HepG2 (cell line): ENCODE measurements at regions of chr3 and their contacts with region 1.

Region 1: DNA sequence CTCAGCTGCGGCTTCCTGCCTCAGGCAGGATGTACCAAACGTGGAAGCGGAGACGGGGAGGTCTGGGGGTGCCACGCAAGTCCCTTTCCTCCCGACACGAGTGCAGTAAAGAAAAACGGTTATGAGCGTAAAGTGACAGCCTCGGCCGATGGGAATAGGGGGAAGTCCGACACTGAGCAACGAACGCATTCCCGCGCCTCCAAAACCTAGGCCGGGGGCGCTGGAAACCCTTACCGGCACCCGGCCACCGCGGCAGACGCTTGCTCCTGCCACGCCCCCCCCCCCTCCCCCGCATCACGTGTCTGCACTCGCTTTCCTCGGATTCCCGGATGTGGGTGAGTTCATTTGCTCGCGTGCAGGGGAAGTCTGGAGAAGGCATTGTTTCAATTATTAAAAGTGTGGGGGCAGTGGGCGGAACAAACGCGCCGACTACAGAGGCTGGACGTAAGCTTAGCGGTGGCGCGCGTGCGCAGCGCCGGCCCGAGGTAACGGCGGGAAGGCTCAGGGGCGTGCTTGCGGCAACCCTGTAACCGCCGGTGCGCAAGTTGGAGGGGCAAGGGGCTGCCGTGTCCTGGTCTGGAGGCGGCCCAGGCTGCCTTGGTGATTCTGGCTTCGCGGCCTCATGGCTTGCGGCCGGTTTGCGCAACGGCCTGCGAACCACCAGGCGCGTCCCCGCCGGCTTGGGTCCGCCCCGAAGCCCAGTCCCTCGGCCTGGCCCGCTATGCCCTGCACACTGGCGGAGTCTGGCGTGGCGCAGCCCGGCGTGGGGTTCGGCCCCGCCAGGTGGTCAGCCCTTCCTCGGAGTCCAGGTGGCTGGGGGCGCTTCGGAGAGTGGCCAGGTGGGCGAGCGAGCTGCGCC is at the starts of genes ANAPC13 and CEP63:
- DNase-seq: peak; percentile 97
- ATAC-seq: peak; percentile 89
- H3K4me3 ChIP-seq: peak within 1 kb of the TSS; percentile 86 to 89 (median 88)
- H3K27ac ChIP-seq: peak within 1 kb of the TSS; percentile 95
- H3K4me1 ChIP-seq: peaks cover 29% of the 10 kb centered on the region
- H3K27me3 ChIP-seq: no peaks in the 10 kb centered on the region
- CTCF ChIP-seq: peak; percentile 14; the same call in 1 of the 2 replicates
- EP300 ChIP-seq: peak in 1 of 2 experiments; percentile 33; a peak in 1 of 4 replicates
- POLR2A ChIP-seq: peak; percentile 75 to 88
- RAD21 ChIP-seq: peak; percentile 12; the same call in 1 of the 2 replicates
- total RNA-seq, gene ANAPC13: 69.1 and 95.1 TPM in 2 replicates
- total RNA-seq, gene CEP63: 18.4 and 25.6 TPM in 2 replicates

Region 2: GRCh38 chr3:134427400-134428145 is 58.4 kb before region 1 on chr3:
- CTCF ChIA-PET with region 1: no interaction called
- POLR2A ChIA-PET with region 1: interaction called, 10 read pairs
- in situ Hi-C with region 1: no loop called
- intact Hi-C with region 1: no loop called
- DNase-seq: peak; percentile 75
- ATAC-seq: peak; percentile 64
- H3K4me3 ChIP-seq: peak overlapping the region in 2 of 3 experiments; percentile 8 to 58; a peak in 3 of 6 replicates
- H3K27ac ChIP-seq: peak overlapping the region; percentile 17
- H3K4me1 ChIP-seq: peaks cover 59% of the 10 kb centered on the region
- H3K27me3 ChIP-seq: no peaks in the 10 kb centered on the region; a peak in 1 of 5 replicates
- CTCF ChIP-seq: no peak
- EP300 ChIP-seq: no peak; a peak in 1 of 4 replicates
- POLR2A ChIP-seq: no peak
- RAD21 ChIP-seq: no peak